Activated CD4-positive, alpha-beta T cell treated with anti-CD3 and anti-CD28 coated beads for 36 hours (primary cell): ENCODE measurements at regions of chr6 and their contacts with region 1.

Region 1: GRCh38 chr6:33271458-33272274 is at the starts of genes RPS18 and VPS52:
- DNase-seq: peak; percentile 94
- ATAC-seq: peak; percentile 92
- H3K4me3 Mint-ChIP-seq: peak within 1 kb of the TSS; percentile 91
- H3K27ac Mint-ChIP-seq: peak within 1 kb of the TSS; percentile 100
- H3K4me1 Mint-ChIP-seq: peaks cover 47% of the 10 kb centered on the region
- H3K27me3 Mint-ChIP-seq: no peaks in the 10 kb centered on the region
- total RNA-seq, gene RPS18: 2,706 to 4,631 TPM
- total RNA-seq, gene VPS52: 35.6 to 45.2 TPM

Region 2: DNA sequence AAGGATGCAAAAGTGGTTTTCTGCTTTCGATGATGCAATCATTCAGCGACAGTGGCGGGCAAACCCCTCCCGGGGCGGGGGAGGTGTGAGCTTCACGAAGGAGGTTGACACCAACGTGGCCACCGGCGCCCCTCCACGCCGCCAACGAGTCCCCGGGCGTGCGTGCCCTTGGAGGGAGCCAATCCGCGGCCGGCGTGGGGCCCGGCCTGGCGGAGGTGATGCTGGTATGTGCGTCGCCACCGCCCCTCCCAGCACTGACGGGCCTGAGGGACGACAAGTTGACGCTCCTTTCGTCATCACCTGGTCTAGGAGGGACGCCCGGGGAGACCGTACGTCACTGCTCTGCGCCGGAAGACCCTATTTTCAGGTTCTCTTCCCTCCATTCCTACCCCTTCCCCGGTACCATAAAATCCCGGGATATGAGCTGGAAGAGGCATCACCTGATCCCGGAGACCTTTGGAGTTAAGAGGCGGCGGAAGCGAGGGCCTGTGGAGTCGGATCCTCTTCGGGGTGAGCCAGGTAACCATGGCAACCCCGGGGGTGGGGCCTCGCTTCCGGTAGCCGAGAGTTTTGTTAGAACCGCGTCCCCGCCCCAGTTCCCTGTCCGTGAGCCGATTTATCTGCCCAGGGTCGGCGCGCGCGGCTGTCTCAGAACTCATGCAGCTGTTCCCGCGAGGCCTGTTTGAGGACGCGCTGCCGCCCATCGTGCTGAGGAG is 1299.5 kb before region 1 on chr6 and contains the start of gene DXO:
- CTCF ChIA-PET with region 1: no interaction called
- POLR2A ChIA-PET with region 1: no interaction called
- intact Hi-C with region 1: loop called in 1 of 2 experiments (anchors 10 kb)
- DNase-seq: peak; percentile 99
- ATAC-seq: peak; percentile 96
- H3K4me3 Mint-ChIP-seq: peak within 1 kb of the TSS; percentile 96
- H3K27ac Mint-ChIP-seq: peak within 1 kb of the TSS; percentile 99
- H3K4me1 Mint-ChIP-seq: peaks cover 43% of the 10 kb centered on the region
- H3K27me3 Mint-ChIP-seq: no peaks in the 10 kb centered on the region
- total RNA-seq, gene DXO: 12.6 to 13.9 TPM

Region 3: GRCh38 chr6:33208091-33208967 is 63.3 kb before region 1 on chr6 and contains the start of gene RING1:
- CTCF ChIA-PET with region 1: interaction called, 3 read pairs
- POLR2A ChIA-PET with region 1: interaction called, 7 read pairs
- intact Hi-C with region 1: loop called in 1 of 2 experiments (anchors 1 kb)
- DNase-seq: peak; percentile 92
- ATAC-seq: peak; percentile 20
- H3K4me3 Mint-ChIP-seq: peak within 1 kb of the TSS; percentile 80
- H3K27ac Mint-ChIP-seq: peak within 1 kb of the TSS; percentile 89
- H3K4me1 Mint-ChIP-seq: peaks cover 55% of the 10 kb centered on the region
- H3K27me3 Mint-ChIP-seq: peaks cover 8% of the 10 kb centered on the region
- total RNA-seq, gene RING1: 28.3 to 39.3 TPM

Region 4: DNA sequence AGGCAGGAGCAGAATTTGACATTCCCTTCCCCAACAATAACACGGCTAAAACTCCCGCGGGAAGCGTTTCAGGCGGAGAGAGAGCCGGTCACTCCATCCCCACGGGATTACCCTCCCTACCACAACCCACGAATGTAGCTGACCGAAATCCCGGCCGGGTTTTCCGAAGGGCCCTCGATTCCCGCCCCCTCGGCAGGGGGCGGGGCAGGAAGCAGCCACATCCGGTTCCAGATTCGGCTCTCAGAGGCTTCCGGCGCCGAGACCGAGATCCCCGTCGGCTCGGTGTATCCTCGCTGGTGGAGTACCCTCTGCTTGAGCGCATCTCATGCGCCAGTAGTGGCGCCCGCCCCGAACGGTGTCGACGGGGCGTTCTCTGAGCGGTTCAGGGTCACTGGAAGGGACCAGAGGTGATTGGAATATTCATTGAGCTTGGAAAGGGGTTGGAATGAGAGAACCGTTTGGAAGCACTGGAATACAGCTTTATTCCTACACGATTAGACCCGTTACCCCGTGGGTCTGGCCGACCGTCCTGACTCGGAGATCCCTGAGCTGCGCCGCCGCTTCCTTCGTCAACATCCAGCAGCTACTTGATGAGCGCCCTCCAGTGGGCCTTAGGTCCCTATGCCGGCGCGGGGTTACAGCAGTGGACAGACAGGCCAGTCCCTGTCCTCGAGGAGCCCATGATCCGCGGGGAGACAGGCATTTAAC is 27.7 kb after region 1 on chr6:
- CTCF ChIA-PET with region 1: interaction called, 3 read pairs
- POLR2A ChIA-PET with region 1: interaction called, 15 read pairs
- intact Hi-C with region 1: loop called in 1 of 2 experiments (anchors 1 kb)
- DNase-seq: peak; percentile 97
- ATAC-seq: peak; percentile 87
- H3K4me3 Mint-ChIP-seq: peak overlapping the region; percentile 80
- H3K27ac Mint-ChIP-seq: peak overlapping the region; percentile 98
- H3K4me1 Mint-ChIP-seq: peaks cover 28% of the 10 kb centered on the region
- H3K27me3 Mint-ChIP-seq: no peaks in the 10 kb centered on the region

Region 5: DNA sequence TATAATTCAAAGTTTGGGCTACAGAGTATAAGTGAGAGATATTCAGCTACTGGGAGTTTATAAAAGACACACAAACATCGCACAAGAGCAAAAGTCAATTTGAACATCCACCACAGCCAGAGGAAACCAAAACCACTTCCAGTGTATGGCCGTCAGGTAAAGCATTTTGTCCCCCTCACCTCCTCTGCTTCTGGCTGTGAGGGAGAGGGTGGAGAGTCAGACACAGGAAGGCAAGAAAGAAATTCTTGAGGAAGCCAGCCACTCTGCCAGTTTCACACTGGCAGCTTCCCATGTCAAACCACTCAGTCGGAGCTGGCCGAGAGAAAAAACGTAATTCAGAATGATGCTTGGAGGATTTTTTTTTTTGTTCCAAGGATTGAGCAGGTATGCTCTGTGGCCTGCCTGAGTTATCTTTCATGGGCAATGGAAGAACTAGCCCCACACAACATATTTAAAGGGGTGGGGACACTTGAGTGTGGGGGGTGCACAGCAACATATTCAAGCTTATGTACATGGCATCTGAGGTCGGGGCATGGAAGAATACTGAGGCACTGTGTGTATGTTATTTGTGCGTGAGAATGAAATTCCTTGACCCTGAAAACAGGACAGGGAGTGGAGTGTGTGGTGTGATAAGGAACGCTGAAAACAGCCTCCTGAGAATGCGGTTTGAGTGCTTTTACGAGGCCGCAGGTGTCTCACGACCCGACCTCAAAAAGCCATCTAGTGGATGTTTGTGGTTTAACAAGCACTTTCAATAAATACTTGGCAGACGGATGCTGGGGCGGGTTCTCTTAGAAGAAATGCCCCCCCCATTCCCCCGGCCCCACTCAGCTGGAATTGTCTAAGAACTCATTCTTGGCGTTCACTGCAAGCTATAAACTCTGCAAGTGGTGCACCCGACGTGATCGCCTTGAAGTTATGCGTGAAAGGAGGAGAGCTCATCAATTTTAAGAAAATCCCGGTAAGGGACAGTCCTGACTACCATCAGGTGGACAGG is 73.3 kb after region 1 on chr6:
- CTCF ChIA-PET with region 1: no interaction called
- POLR2A ChIA-PET with region 1: no interaction called
- intact Hi-C with region 1: loop called (anchors 2 kb)
- DNase-seq: peak; percentile 79
- ATAC-seq: peak; percentile 54
- H3K4me3 Mint-ChIP-seq: peak overlapping the region; percentile 56
- H3K27ac Mint-ChIP-seq: peak overlapping the region; percentile 78
- H3K4me1 Mint-ChIP-seq: peaks cover 21% of the 10 kb centered on the region
- H3K27me3 Mint-ChIP-seq: no peaks in the 10 kb centered on the region

Region 6: DNA sequence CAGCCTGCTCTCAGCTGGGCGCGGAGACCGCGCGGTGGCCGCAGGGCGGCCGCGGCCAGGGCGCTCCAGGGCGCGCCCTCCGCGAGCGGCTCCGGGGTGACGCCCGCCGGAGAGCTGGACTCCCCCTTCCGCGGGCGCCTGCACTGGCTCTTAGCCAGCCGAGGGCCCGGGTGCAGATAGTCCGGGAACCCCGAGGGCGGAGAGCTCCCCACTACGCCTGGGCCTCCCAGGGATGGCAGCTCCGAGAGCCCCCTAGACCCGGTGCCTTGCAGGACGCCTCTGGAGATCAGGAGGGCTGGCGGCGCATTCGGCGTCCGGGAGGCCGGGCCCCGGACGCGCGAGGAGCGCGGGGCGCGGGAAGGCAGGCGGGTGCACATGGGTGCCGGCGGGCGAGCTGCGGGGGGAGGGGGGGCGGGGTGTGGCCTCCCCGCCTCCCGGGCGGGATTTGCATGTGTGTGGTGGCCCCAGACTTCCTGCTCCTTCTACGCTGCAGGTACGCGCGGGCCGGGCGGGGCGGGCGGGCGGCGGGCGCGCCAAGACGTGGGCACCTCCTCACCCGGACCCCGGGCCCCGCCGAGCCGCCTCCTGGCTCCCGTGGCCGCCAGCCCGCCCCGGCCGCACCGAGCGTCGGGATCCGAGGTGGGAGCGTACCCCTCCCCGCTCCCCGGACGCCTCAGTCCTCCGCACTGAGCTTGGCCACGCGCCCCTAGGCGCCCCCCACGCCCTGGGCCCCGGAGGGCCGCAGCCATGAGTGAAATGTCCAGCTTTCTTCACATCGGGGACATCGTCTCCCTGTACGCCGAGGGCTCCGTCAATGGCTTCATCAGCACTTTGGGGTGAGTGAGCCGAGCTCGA is 349.4 kb after region 1 on chr6 and contains the start of gene ITPR3:
- CTCF ChIA-PET with region 1: no interaction called
- POLR2A ChIA-PET with region 1: no interaction called
- intact Hi-C with region 1: loop called in 1 of 2 experiments (anchors 5 kb)
- DNase-seq: peak; percentile 86
- ATAC-seq: peak; percentile 85
- H3K4me3 Mint-ChIP-seq: peak within 1 kb of the TSS; percentile 94
- H3K27ac Mint-ChIP-seq: peak within 1 kb of the TSS; percentile 91
- H3K4me1 Mint-ChIP-seq: peaks cover 46% of the 10 kb centered on the region
- H3K27me3 Mint-ChIP-seq: no peaks in the 10 kb centered on the region
- total RNA-seq, gene ITPR3: 42.6 to 42.9 TPM